Natural killer cell (primary cell): ENCODE measurements at regions of chr11 and their contacts with region 1.

Region 1: DNA sequence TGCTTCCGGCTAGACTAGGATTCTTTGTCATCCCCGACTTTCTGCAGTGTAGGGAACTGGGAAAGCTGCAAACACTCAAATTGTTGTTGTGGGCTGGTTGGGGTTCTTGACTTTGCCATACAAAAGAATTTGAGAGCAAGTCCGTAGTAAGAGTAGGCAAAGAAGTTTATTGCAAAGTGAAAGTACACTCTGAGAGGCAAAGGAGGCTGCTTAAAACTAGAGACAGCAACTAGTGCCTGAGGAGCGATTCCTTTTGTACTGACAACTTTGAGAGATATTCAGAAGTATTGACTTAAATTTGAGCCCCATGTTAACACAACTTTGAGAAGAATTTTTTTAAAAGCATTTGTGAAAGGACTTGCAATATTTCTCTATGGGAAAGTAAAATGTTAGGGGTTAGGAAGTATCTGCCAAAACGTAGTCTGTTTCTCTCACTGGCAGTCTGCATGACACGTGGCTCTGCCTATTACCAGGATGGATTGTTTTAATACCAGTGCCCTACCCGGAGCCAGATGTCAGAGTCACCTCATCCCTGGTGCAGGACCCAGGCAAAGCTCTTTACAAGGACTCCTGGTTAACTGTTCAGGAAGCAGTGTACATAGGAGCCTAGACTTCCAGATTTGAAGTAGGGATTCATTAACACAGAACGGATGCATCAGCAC is 85.0 kb upstream of the CLPB start:
- DNase-seq: peak in 1 of 2 donors; percentile 46
- ATAC-seq: peak; percentile 32 to 50 (median 49)
- H3K4me3 ChIP-seq: peak overlapping the region; percentile 33
- H3K4me3 Mint-ChIP-seq: peak overlapping the region; percentile 86
- H3K27ac ChIP-seq: peak overlapping the region; percentile 62
- H3K27ac Mint-ChIP-seq: peak overlapping the region; percentile 81 to 85
- H3K4me1 ChIP-seq: peaks cover 34% of the 10 kb centered on the region
- H3K4me1 Mint-ChIP-seq: peaks cover 49 to 56% of the 10 kb centered on the region in 2 donors
- H3K27me3 ChIP-seq: no peaks in the 10 kb centered on the region
- H3K27me3 Mint-ChIP-seq: peaks cover 0 to 3% of the 10 kb centered on the region in 2 donors
- CTCF ChIP-seq: no peak

Region 2: DNA sequence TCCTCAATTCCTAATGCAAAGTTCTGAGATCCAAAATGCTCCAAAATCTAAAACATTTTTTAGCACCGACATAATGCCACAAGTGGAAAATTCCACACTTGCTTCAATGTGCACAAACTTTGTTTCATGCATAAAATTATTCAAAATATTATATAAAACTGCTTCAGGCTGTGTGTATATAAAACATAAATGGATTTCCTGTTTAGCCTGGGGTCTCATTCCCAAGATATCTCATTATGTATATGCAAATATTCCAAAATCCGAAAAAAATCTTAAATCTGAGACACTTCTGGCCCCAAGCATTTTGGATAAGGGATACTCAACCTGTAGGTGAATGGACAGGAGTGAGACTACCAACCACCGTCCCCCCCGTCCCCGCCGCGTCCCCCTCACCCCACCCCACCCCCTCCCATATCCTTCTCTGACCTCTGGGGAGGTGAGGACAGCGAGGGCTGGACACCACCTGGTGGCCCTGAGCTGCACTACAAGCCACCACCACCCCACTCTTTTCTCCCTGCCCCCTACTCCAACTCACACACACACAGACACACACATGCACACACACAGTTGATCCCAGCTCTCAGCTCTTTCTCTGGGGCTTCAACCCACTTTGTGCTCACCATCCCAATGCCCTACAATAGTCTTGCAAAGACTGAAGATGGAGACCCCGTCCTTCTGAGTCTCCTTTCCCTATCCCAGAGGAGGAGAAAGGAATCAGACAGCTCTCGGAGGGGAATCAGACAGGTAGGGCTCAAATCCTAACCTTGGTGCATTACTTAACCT is 53.9 kb after region 1 on chr11:
- intact Hi-C with region 1: loop called (anchors 2 kb)
- DNase-seq: peak; percentile 41 to 64
- ATAC-seq: peak in 2 of 3 donors; percentile 50 to 71
- H3K4me3 ChIP-seq: no peak overlapping the region
- H3K4me3 Mint-ChIP-seq: peak overlapping the region; percentile 17
- H3K27ac ChIP-seq: no peak overlapping the region
- H3K27ac Mint-ChIP-seq: peak overlapping the region in 1 of 2 donors; percentile 42
- H3K4me1 ChIP-seq: peaks cover 35% of the 10 kb centered on the region
- H3K4me1 Mint-ChIP-seq: peaks cover 40 to 51% of the 10 kb centered on the region in 2 donors
- H3K27me3 ChIP-seq: no peaks in the 10 kb centered on the region
- H3K27me3 Mint-ChIP-seq: peaks cover 0 to 2% of the 10 kb centered on the region in 2 donors
- CTCF ChIP-seq: peak; percentile 61